Lower lobe of right lung (tissue), 2 donors: ENCODE measurements at regions of chr4 and their contacts with region 1.

Region 1: DNA sequence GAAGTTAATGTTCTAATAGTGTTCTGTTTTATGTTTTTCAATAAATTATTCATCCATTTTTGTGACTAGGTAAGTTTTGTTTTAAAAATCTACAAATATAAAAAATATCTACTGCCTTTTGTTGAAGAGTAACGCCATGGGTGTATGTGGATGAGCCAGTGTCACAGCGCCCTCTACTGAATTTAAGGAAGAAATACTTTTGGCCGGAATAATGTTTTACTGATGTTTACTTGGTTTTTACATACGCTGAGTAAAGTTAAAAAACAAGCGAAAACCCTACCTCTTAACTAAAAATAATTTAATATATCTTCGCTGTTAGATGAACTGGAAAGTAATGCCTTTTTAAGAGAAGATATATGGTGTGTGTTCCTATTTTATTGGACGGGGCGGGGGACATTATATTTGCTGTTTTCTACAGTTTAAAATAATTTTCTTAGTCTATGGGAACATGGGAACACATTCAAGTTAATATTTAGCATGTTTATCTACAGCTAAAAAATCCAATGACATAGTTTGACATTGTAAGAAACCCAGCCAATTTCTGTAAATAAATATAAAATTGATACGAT is 86.1 kb downstream of the CPE start:
- DNase-seq: no peak
- ATAC-seq: peak; percentile 66 to 79
- H3K4me3 ChIP-seq: no peak overlapping the region
- H3K27ac ChIP-seq: no peak overlapping the region
- H3K4me1 ChIP-seq: no peaks in the 10 kb centered on the region
- H3K27me3 ChIP-seq: no peaks in the 10 kb centered on the region
- CTCF ChIP-seq: peak; percentile 70

Region 2: DNA sequence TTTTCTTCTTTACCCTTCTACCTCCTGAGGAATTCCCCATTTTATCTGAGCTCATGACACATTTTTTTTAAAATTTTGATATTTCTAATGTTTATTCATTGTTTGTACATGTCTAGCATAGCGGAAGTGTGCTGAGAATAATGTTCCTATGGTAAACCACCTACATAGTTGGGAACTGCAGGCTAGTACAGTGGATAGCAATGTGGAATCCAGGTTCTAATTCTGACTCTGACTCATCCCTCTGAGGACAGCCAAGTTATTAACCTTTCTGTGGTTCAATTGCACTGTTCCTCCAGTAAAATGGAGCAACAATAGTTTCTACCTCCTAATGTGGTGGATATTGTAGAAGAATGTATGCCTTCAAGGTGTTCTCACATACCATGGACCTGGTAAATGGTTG is 608.5 kb before region 1 on chr4:
- intact Hi-C with region 1: no loop called
- DNase-seq: no peak
- ATAC-seq: no peak
- H3K4me3 ChIP-seq: no peak overlapping the region
- H3K27ac ChIP-seq: no peak overlapping the region
- H3K4me1 ChIP-seq: no peaks in the 10 kb centered on the region
- H3K27me3 ChIP-seq: no peaks in the 10 kb centered on the region
- CTCF ChIP-seq: no peak

Region 3: DNA sequence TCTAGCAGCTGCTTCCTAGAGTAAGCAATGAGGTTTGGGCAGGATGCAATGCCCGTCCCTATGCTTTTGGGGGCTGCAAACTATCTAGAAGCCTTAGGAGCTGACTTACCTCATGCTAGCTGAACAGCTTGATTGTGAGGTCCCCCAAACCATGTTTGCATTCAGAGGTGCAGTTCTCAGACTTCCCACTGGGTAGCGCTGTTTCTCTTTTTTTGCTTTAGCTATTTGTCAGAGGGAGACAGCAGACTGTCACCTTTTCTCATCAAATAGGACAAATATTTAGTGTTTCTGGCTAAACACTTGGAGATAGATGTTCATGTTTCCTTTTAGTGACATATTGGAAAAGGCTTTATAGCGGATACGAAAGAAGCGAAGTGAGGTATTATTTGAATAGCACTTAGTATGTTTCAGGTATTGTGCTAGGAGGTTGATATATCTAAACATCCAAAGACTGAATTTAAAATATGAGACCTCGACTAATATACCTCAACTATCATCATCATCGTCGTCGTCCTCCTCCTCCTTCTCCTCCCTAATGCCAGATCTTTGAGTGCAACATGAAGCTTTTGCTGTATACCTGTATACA is 333.6 kb before region 1 on chr4:
- intact Hi-C with region 1: loop called (anchors 5 kb)
- DNase-seq: no peak
- ATAC-seq: peak; percentile 84 to 86
- H3K4me3 ChIP-seq: no peak overlapping the region
- H3K27ac ChIP-seq: no peak overlapping the region
- H3K4me1 ChIP-seq: no peaks in the 10 kb centered on the region
- H3K27me3 ChIP-seq: no peaks in the 10 kb centered on the region
- CTCF ChIP-seq: peak; percentile 92